MCF 10A (cell line): ENCODE measurements at regions of chr4 and their contacts with region 1.

Region 1: DNA sequence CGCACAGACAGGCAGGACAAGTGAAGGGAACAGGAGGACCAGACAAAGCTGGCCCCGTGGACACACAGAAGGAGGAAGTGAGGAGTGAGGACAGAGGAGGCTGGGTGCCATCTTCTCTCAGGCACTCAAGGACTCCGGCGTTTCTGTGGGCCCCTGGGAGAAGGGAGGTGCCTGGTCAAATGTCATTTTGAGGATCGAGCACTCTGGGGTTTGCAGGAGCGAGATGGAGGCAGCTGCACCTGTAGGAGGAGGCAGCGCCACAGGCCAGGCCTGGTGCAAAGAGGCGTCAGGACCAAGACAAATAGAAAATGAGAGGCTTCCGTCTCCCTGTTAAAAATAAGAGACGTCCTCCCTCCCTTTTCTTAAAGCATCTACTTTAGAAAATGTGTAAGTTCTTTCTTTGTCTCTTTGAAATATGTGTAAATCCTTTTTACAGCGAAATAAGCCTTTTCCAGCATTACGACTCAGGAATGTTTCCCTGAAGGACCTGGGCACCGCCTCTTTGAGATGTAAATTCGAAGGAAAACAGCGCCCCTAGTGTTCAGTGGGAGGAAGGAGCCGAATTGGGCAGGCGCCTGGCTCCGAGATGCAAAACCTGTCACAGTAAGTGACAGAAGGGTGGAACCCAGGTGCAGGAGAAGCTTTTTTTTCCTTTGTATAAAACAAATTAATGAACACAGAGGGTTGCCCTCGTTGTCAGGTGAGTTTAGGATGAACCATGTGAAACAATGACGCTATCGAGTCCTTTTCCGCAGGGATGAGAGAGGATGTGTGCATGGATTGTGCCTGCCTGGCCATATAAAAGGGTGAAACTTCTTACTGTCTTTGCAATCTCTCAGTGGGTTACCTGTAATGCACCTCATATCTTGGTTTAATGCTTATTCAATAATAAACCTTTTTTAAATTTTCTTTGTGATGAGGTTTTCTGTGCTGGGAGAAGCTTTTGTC is 1.4 kb upstream of the C4orf50 start:
- DNase-seq: peak; percentile 59
- H3K4me3 Mint-ChIP-seq: no peak overlapping the region
- H3K27ac Mint-ChIP-seq: no peak overlapping the region
- H3K4me1 Mint-ChIP-seq: no peaks in the 10 kb centered on the region
- H3K27me3 Mint-ChIP-seq: no peaks in the 10 kb centered on the region
- CTCF ChIP-seq: peak; percentile 44

Region 2: GRCh38 chr4:6032249-6033244 is 13.0 kb after region 1 on chr4:
- CTCF ChIA-PET with region 1: interaction called, 22 read pairs
- POLR2A ChIA-PET with region 1: no interaction called
- intact Hi-C with region 1: no loop called
- DNase-seq: peak; percentile 11
- H3K4me3 Mint-ChIP-seq: no peak overlapping the region
- H3K27ac Mint-ChIP-seq: no peak overlapping the region
- H3K4me1 Mint-ChIP-seq: no peaks in the 10 kb centered on the region
- H3K27me3 Mint-ChIP-seq: no peaks in the 10 kb centered on the region
- CTCF ChIP-seq: no peak